Sigmoid colon (tissue), 7 donors: ENCODE measurements at regions of chr4 and their contacts with region 1.

Region 1: DNA sequence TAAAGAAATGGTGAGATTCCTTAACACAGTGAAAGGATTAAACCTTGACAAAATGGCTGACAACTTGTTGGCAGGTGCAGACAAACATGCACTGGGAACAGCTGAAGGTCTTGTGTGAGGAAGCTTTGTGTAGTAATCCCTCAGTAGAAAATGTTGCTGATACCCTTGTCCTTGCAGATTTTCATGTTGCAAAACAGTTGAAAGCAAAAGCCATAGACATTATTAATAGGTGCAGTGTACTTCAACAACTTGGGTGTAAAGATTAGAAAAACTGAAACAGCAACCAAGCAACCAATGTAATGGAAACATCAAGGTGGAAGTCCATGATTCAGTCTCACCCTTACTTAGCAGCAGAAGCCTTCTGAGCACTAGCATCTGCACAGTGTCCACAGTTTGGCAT is 29.8 kb downstream of the UGT2B7 start:
- DNase-seq: no peak
- H3K4me3 ChIP-seq: no peak overlapping the region
- H3K27ac ChIP-seq: no peak overlapping the region
- H3K4me1 ChIP-seq: no peaks in the 10 kb centered on the region
- H3K27me3 ChIP-seq: no peaks in the 10 kb centered on the region
- CTCF ChIP-seq: no peak
- EP300 ChIP-seq: no peak
- POLR2A ChIP-seq: no peak

Region 2: GRCh38 chr4:68885545-68885944 is 240.5 kb before region 1 on chr4:
- intact Hi-C with region 1: loop called (anchors 5 kb)
- DNase-seq: no peak
- H3K4me3 ChIP-seq: no peak overlapping the region
- H3K27ac ChIP-seq: no peak overlapping the region
- H3K4me1 ChIP-seq: no peaks in the 10 kb centered on the region
- H3K27me3 ChIP-seq: no peaks in the 10 kb centered on the region
- CTCF ChIP-seq: no peak
- EP300 ChIP-seq: no peak
- POLR2A ChIP-seq: no peak